Panc1 (cell line): ENCODE measurements at regions of chr7 and their contacts with region 1.

Region 1: DNA sequence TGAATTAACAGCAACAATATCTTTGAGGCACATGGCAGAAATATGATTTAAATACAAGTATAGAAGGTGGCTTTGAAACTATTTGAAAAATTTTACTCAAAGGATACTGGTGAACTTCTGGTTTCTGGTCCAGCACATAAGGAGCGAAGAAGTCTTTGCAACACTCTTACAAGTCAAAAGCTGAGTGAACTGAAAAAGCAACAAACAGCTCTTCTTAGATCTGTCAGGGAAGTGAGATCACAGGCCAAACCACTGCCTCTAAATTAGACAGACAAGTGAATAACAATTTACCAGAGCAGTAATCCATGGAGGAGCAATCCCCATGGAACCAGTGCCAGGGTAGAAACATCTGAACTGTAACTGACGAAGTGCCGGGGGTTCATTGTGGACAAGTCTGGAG is 9.6 kb upstream of the VWC2 start:
- DNase-seq: no peak
- ATAC-seq: no peak
- H3K4me3 ChIP-seq: no peak overlapping the region
- H3K27ac ChIP-seq: no peak overlapping the region
- H3K4me1 ChIP-seq: no peaks in the 10 kb centered on the region
- H3K27me3 ChIP-seq: no peaks in the 10 kb centered on the region
- CTCF ChIP-seq: no peak

Region 2: GRCh38 chr7:49341849-49342248 is 421.9 kb before region 1 on chr7:
- CTCF ChIA-PET with region 1: no interaction called
- POLR2A ChIA-PET with region 1: no interaction called
- in situ Hi-C with region 1: no loop called
- intact Hi-C with region 1: loop called (anchors 5 kb)
- DNase-seq: no peak
- ATAC-seq: no peak
- H3K4me3 ChIP-seq: no peak overlapping the region
- H3K27ac ChIP-seq: no peak overlapping the region
- H3K4me1 ChIP-seq: no peaks in the 10 kb centered on the region
- H3K27me3 ChIP-seq: no peaks in the 10 kb centered on the region
- CTCF ChIP-seq: no peak

Region 3: DNA sequence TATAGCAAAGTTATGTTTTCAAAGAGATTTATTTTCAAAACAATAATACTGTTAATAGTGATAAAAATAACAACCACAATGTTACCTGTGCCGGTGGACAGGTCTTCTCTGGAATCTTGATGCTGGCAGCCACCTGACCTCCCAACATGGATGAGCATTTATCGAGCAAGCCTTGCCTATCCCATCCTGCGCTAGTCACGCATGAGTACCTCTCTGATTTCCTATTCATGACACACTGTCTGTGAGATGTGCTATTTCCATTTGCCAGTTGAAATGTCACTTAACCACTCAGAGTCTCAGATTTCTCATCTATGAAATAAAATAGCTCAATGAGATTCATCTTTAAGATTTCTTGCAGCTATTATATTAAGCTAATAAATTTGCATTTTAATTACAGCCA is 331.5 kb before region 1 on chr7:
- CTCF ChIA-PET with region 1: no interaction called
- POLR2A ChIA-PET with region 1: no interaction called
- in situ Hi-C with region 1: no loop called
- intact Hi-C with region 1: no loop called
- DNase-seq: no peak
- ATAC-seq: no peak
- H3K4me3 ChIP-seq: no peak overlapping the region
- H3K27ac ChIP-seq: no peak overlapping the region
- H3K4me1 ChIP-seq: no peaks in the 10 kb centered on the region
- H3K27me3 ChIP-seq: no peaks in the 10 kb centered on the region
- CTCF ChIP-seq: no peak

Region 4: GRCh38 chr7:50229964-50230363 is 466.2 kb after region 1 on chr7:
- CTCF ChIA-PET with region 1: no interaction called
- POLR2A ChIA-PET with region 1: no interaction called
- in situ Hi-C with region 1: no loop called
- intact Hi-C with region 1: no loop called
- DNase-seq: no peak
- ATAC-seq: no peak
- H3K4me3 ChIP-seq: no peak overlapping the region
- H3K27ac ChIP-seq: no peak overlapping the region
- H3K4me1 ChIP-seq: no peaks in the 10 kb centered on the region
- H3K27me3 ChIP-seq: no peaks in the 10 kb centered on the region
- CTCF ChIP-seq: peak; percentile 69; the same call in 1 of the 2 replicates